Lower leg skin (tissue), 4 donors: ENCODE measurements at regions of chr19 and their contacts with region 1.

Region 1: GRCh38 chr19:4811328-4812131 is 20.0 kb downstream of the TICAM1 start:
- DNase-seq: peak; percentile 80 to 97
- H3K4me3 ChIP-seq: no peak overlapping the region
- CTCF ChIP-seq: peak in 1 of 3 donors; percentile 84
- POLR2A ChIP-seq: no peak

Region 2: GRCh38 chr19:4660181-4660791 is 151.2 kb before region 1 on chr19:
- intact Hi-C with region 1: no loop called
- DNase-seq: no peak
- H3K4me3 ChIP-seq: no peak overlapping the region
- CTCF ChIP-seq: no peak
- POLR2A ChIP-seq: no peak

Region 3: GRCh38 chr19:4851551-4852290 is 40.2 kb after region 1 on chr19:
- intact Hi-C with region 1: loop called (anchors 5 kb)
- DNase-seq: peak; percentile 42 to 93
- H3K4me3 ChIP-seq: no peak overlapping the region
- CTCF ChIP-seq: peak in 1 of 3 donors; percentile 75
- POLR2A ChIP-seq: no peak

Region 4: GRCh38 chr19:4916292-4917082 is 105.0 kb after region 1 on chr19:
- intact Hi-C with region 1: loop called (anchors 5 kb)
- DNase-seq: no peak
- H3K4me3 ChIP-seq: no peak overlapping the region
- CTCF ChIP-seq: no peak
- POLR2A ChIP-seq: no peak